SK-N-SH (cell line): ENCODE measurements at regions of chr10 and their contacts with region 1.

Region 1: DNA sequence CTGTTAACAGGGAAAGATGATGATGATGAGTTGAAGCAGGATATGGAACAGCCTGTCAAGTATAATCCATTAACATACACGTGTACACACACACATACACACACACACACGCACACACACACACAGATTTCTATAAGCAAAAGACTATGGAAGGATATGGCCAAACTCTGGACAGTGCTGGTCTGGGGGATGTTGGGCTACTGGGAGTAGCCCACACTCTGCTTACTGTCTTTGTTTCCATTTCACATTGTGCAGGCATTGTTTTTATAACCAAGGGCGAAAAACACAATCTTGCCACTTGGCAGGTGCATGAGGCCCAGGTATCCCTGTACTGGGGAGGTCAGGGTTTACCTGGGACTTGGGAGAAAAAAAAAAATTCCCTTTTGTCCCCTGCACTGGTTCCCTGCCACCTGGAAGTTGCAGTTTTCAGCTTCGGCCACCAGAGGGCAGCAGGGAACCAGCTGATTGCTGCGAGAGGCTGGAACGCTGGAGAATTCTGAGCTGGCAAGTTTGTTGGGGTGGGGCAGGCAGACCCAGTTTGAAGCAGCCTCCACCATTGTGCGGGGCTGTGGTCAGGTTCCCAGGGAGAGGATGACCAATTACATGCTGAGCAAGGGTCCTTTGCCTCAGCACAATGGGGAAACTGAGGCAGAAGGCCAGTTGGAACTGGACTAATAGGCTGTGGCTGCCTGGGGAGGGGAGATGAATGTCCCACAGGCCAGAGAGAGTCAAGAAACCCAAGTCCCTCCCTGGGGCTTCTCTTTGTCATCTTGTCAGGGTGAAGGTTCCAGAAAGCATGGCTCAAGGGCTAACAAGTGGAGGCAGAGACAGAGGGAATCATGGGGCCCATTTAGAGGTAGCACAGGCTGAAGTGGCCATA is 27.3 kb downstream of the PPIF start:
- DNase-seq: peak; percentile 84
- H3K4me3 ChIP-seq: no peak overlapping the region
- H3K27ac ChIP-seq: no peak overlapping the region
- H3K4me1 ChIP-seq: peaks cover 7% of the 10 kb centered on the region in 2 experiments; a peak in 2 of 4 replicates
- H3K27me3 ChIP-seq: no peaks in the 10 kb centered on the region
- CTCF ChIP-seq: peak; percentile 91
- EP300 ChIP-seq: no peak
- RAD21 ChIP-seq: peak; percentile 99

Region 2: DNA sequence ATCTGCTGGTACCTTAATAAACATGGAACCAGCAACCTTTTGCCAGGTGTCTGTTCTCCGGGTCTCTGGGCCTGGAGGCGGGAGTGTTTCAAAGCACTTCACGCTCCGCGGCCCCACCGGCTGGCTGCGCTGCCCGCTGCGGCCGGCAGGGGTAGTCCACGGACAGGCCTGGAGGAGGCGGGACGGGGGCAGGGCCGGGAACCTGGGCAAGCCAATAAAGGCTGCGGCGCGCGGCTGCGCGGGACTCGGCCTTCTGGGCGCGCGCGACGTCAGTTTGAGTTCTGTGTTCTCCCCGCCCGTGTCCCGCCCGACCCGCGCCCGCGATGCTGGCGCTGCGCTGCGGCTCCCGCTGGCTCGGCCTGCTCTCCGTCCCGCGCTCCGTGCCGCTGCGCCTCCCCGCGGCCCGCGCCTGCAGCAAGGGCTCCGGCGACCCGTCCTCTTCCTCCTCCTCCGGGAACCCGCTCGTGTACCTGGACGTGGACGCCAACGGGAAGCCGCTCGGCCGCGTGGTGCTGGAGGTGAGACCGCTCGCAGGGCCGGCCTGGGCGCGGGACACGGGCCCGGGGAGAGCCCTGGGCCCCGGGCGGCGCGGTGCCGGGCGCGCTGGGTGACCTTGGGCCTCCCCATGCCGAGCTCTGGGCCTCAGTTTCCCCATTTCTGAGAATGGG is 27.2 kb before region 1 on chr10 and contains the start of gene PPIF:
- CTCF ChIA-PET with region 1: interaction called, 13 read pairs
- POLR2A ChIA-PET with region 1: no interaction called
- DNase-seq: peak; percentile 97
- H3K4me3 ChIP-seq: peak within 1 kb of the TSS; percentile 95 to 96
- H3K27ac ChIP-seq: peak within 1 kb of the TSS; percentile 70 to 79
- H3K4me1 ChIP-seq: peaks cover 13 to 56% of the 10 kb centered on the region in 2 experiments; a peak in 3 of 4 replicates
- H3K27me3 ChIP-seq: no peaks in the 10 kb centered on the region
- CTCF ChIP-seq: peak; percentile 83
- EP300 ChIP-seq: no peak
- RAD21 ChIP-seq: peak; percentile 56
- polyA plus RNA-seq, gene PPIF: 73.8 and 85.9 TPM in 2 replicates

Region 3: DNA sequence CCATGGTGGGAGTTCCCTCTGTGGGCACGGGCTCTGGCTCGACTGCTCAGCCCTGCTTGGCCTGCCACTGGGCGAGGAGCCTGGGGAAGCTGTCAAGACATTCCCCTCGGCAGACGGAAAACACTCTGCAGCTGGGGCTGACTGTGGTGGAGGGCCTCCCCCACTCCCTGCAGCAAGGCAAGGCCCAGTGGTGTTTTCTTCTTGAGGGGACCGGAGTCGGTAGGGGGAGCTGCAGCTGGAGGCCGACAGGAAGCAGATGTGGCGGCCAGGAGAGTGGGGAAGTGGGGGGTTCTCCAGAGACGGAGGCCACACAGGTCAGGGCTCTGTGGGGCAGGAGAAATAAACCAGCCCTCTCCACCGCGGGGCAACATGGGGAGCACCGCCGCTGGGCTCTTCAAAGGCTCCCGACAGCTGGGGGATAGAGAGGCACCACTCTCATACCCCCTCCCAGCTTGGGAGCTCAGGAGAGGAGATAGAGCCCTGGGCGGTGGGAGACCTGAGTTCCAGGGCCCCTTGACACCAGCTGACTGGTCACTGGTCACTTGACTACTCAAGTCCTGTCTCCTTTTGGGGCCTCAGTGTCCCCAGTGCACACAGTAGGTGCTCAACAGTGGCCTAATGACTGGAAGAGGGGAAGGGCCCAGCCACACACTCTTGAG is 16.1 kb after region 1 on chr10:
- CTCF ChIA-PET with region 1: interaction called, 45 read pairs
- POLR2A ChIA-PET with region 1: no interaction called
- DNase-seq: peak; percentile 32
- H3K4me3 ChIP-seq: no peak overlapping the region
- H3K27ac ChIP-seq: no peak overlapping the region
- H3K4me1 ChIP-seq: peaks cover 0 to 20% of the 10 kb centered on the region in 2 experiments; a peak in 1 of 4 replicates
- H3K27me3 ChIP-seq: no peaks in the 10 kb centered on the region
- CTCF ChIP-seq: no peak
- EP300 ChIP-seq: no peak
- RAD21 ChIP-seq: no peak

Region 4: GRCh38 chr10:79438021-79438698 is 63.6 kb after region 1 on chr10:
- CTCF ChIA-PET with region 1: interaction called, 10 read pairs
- POLR2A ChIA-PET with region 1: no interaction called
- DNase-seq: no peak
- H3K4me3 ChIP-seq: no peak overlapping the region
- H3K27ac ChIP-seq: no peak overlapping the region
- H3K4me1 ChIP-seq: peaks cover 20 to 62% of the 10 kb centered on the region in 2 experiments; a peak in 3 of 4 replicates
- H3K27me3 ChIP-seq: no peaks in the 10 kb centered on the region
- CTCF ChIP-seq: peak; percentile 32
- EP300 ChIP-seq: no peak
- RAD21 ChIP-seq: peak; percentile 63

Region 5: DNA sequence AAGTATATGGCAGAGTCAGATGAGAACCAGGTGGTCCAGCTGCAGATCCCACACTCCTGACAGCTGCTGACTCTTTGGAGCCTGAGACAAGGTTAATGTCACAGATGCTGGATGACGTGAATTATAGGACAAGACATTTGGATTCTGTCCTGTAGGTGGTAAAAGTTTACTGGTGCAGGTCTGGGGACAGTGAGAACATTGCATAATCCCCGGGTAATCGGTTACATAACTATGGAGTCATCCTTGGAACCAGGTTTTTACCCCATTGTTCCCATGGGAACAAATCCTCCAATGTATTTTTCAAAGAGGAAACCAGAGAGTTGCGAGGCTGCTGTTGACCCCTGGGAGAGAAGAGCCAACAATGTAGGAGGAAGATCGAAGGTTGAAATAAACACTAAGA is 98.4 kb after region 1 on chr10:
- CTCF ChIA-PET with region 1: interaction called, 75 read pairs
- POLR2A ChIA-PET with region 1: no interaction called
- DNase-seq: no peak
- H3K4me3 ChIP-seq: no peak overlapping the region
- H3K27ac ChIP-seq: no peak overlapping the region
- H3K4me1 ChIP-seq: no peaks in the 10 kb centered on the region
- H3K27me3 ChIP-seq: no peaks in the 10 kb centered on the region
- CTCF ChIP-seq: no peak
- EP300 ChIP-seq: no peak
- RAD21 ChIP-seq: no peak

Region 6: GRCh38 chr10:79496896-79497295 is 122.3 kb after region 1 on chr10:
- CTCF ChIA-PET with region 1: interaction called, 21 read pairs
- POLR2A ChIA-PET with region 1: no interaction called
- DNase-seq: no peak
- H3K4me3 ChIP-seq: no peak overlapping the region
- H3K27ac ChIP-seq: no peak overlapping the region
- H3K4me1 ChIP-seq: no peaks in the 10 kb centered on the region; a peak in 1 of 4 replicates
- H3K27me3 ChIP-seq: no peaks in the 10 kb centered on the region; the same call in 1 of the 2 replicates
- CTCF ChIP-seq: no peak
- EP300 ChIP-seq: no peak
- RAD21 ChIP-seq: no peak

Region 7: GRCh38 chr10:79627075-79627474 is 252.5 kb after region 1 on chr10:
- CTCF ChIA-PET with region 1: no interaction called
- POLR2A ChIA-PET with region 1: no interaction called
- DNase-seq: no peak
- H3K4me3 ChIP-seq: no peak overlapping the region
- H3K27ac ChIP-seq: no peak overlapping the region
- H3K4me1 ChIP-seq: no peaks in the 10 kb centered on the region
- H3K27me3 ChIP-seq: no peaks in the 10 kb centered on the region
- CTCF ChIP-seq: no peak
- EP300 ChIP-seq: no peak
- RAD21 ChIP-seq: no peak